ENCODE measurements at regions of chr2 and their contacts with region 1.

Region 1: DNA sequence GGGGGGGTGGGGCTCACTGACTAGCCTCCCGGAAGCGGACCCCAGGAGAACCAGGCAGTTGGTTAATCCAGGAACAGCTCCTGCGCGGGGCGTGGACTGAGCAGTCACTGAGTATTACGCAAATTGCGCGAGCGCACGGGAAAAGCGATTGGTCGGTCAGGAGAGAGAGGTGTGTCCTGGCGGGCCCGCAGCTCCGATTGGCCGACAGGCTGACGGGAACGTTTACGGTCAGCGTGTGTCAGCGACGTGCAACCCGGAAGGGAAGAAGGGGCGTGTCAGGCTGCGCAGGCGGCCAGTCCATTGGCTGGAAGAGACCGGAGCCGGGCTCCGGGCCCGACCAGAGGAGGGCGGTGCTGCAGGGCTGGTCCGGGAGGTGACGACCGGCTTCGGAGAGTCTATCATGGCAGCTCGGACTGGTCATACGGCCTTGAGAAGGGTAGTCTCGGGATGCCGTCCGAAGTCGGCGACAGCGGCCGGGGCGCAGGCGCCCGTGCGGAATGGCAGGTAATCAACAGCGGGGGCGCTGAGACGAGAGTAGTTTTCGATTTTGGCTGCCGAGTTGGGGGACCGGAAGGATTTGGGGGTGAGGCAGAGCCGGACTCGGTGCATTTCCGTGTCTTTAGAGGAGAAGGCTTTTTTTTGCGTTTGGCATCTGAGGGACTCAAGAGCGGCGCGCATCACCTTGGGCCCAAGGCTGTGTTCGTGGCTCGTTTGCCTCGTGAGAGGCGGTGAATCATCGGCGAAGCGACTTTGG is at the start of gene COQ10B:
- DNase-seq: peak; percentile 97 to 100
- ATAC-seq: peak; percentile 80 to 95 (median 84)
- H3K4me3 ChIP-seq: peak within 1 kb of the TSS; percentile 81
- H3K4me3 Mint-ChIP-seq: peak within 1 kb of the TSS; percentile 99
- H3K27ac ChIP-seq: peak within 1 kb of the TSS; percentile 98
- H3K27ac Mint-ChIP-seq: peak within 1 kb of the TSS; percentile 100
- H3K4me1 ChIP-seq: peaks cover 5% of the 10 kb centered on the region
- H3K4me1 Mint-ChIP-seq: peaks cover 46 to 54% of the 10 kb centered on the region in 2 donors
- H3K27me3 ChIP-seq: no peaks in the 10 kb centered on the region
- H3K27me3 Mint-ChIP-seq: no peaks in the 10 kb centered on the region
- CTCF ChIP-seq: no peak
- total RNA-seq, gene COQ10B: 64.6 to 79.2 (median 72.5) TPM

Region 2: DNA sequence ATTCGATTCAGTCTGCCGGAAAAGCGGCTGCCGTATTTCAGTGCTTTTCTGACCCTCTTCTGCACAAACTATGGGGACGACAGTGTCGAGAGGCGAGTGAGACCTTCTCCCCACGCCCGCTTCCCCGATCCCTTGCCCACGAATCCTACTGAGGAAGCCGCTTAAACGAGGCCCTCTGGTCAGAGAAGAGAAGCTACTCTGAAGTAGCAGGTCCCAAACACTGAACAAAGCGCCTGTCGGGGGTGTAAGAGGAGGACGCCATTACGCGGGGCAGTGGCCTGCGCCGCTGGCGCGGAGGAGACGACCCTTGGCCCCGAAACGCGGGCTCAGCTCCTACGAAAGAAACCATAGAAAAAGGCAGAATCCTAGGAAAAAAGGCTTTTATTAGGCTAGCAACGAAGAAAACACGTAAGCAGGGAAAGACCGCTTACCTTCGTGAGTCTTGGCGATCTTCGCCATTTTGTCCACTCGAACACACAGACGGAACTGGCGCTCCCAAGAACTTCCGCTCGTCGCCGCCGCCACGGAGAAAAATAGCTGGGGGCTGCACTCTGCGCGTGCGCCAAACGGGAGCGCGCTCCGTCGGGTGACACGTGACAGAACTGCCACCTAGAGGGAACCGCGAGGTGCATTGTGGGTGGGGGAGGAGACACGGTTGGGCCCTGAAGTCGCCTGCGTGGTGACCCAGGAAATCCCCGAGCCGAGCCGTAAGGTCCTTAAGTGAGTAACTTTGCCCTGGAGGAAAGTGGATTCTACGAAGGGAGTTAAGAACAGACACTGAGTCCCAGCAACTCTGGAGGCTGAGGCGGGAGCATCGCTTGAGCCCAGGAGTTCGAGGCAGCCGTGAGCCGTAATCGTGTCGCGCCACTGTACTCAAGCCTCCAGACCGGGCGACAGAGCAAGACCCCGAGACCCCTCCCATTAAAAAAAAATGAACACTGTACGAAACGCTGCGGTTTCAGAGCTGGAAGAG is 18.5 kb before region 1 on chr2 and contains the start of gene SF3B1:
- intact Hi-C with region 1: loop called (anchors 1 kb)
- DNase-seq: peak; percentile 99 to 100
- ATAC-seq: peak; percentile 94 to 99 (median 97)
- H3K4me3 ChIP-seq: peak within 1 kb of the TSS; percentile 92
- H3K4me3 Mint-ChIP-seq: peak within 1 kb of the TSS; percentile 98
- H3K27ac ChIP-seq: peak within 1 kb of the TSS; percentile 97
- H3K27ac Mint-ChIP-seq: peak within 1 kb of the TSS; percentile 98 to 100
- H3K4me1 ChIP-seq: peaks cover 30% of the 10 kb centered on the region
- H3K4me1 Mint-ChIP-seq: peaks cover 60 to 64% of the 10 kb centered on the region in 2 donors
- H3K27me3 ChIP-seq: no peaks in the 10 kb centered on the region
- H3K27me3 Mint-ChIP-seq: no peaks in the 10 kb centered on the region
- CTCF ChIP-seq: no peak
- total RNA-seq, gene SF3B1: 387 to 472 (median 447) TPM

Region 3: GRCh38 chr2:197515739-197516392 is 62.5 kb after region 1 on chr2 and contains the start of gene MOB4:
- intact Hi-C with region 1: loop called (anchors 1 kb)
- DNase-seq: peak; percentile 97
- ATAC-seq: peak; percentile 89 to 97 (median 92)
- H3K4me3 ChIP-seq: peak within 1 kb of the TSS; percentile 64
- H3K4me3 Mint-ChIP-seq: peak within 1 kb of the TSS; percentile 92
- H3K27ac ChIP-seq: peak within 1 kb of the TSS; percentile 88
- H3K27ac Mint-ChIP-seq: peak within 1 kb of the TSS; percentile 90 to 97
- H3K4me1 ChIP-seq: peaks cover 20% of the 10 kb centered on the region
- H3K4me1 Mint-ChIP-seq: peaks cover 36 to 39% of the 10 kb centered on the region in 2 donors
- H3K27me3 ChIP-seq: no peaks in the 10 kb centered on the region
- H3K27me3 Mint-ChIP-seq: no peaks in the 10 kb centered on the region
- CTCF ChIP-seq: no peak
- total RNA-seq, gene MOB4: 27.1 to 40.0 (median 34.9) TPM

Measured in natural killer cell (primary cell).